ENCODE measurements at regions of chr13 and their contacts with region 1.

Region 1: DNA sequence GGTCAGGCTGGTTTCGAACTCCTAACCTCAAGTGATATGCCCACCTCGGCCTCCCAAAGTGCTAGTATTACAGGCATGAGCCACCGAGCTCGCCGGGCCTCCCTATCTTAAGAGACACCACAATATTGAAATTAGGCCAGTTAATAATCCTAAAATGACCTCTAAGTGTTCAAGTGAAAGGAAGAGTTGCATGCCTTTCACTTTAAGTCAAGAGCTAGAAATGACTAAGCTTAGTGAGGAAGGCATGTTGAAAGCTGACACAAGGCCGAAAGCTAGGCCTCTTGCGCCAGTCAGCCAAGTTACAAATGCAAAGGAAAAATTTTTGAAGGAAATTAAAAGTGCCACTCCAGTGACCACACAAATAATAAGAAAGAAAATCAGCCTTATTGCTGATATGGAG is 144.5 kb upstream of the FNDC3A start:
- DNase-seq: no peak
- H3K4me3 ChIP-seq: no peak overlapping the region
- H3K27me3 ChIP-seq: no peaks in the 10 kb centered on the region
- CTCF ChIP-seq: no peak

Region 2: GRCh38 chr13:48804821-48805601 is 26.2 kb before region 1 on chr13:
- CTCF ChIA-PET with region 1: no interaction called
- POLR2A ChIA-PET with region 1: interaction called, 19 read pairs
- DNase-seq: no peak
- H3K4me3 ChIP-seq: no peak overlapping the region
- H3K27me3 ChIP-seq: no peaks in the 10 kb centered on the region
- CTCF ChIP-seq: no peak

Region 3: DNA sequence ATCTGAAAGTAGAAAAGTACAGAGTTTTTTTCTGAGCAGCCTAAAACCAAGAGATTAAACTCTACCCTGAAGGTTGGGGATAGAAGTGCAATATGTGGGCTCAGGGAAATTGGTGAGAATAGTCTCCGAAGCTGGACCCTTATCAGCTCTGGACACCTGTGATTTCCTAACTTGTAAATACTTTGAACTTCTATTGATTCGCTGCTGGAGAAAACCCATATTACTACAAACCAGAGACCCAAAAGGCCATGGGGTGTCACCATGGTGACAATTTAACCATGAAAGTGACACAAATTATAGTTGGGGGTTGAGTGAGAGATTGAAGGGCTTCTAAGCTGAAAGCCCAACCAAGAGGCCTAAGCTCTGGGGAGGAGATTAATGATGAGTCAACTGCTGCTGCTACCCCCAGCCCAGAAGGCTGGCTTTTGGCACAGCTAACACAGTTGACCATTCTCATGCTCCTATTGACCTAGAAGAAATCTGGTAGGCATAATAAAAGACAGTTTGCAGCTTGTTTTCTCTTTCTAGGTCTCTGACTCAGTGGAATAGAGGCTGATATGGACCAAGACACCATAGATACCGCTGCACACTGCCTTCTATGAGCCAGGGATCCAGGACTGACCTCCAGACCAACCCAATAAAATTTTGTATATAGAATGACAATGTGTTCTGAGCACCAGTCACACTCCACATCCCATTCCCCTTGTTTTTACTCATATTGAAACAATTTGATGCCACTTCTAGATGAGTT is 12.6 kb after region 1 on chr13:
- CTCF ChIA-PET with region 1: no interaction called
- POLR2A ChIA-PET with region 1: no interaction called
- DNase-seq: no peak
- H3K4me3 ChIP-seq: no peak overlapping the region
- H3K27me3 ChIP-seq: no peaks in the 10 kb centered on the region
- CTCF ChIP-seq: no peak